Common myeloid progenitor, CD34-positive (primary cell): ENCODE measurements at regions of chr2 and their contacts with region 1.

Region 1: GRCh38 chr2:38430597-38431207 is 53.6 kb upstream of the ATL2 start:
- DNase-seq: no peak
- H3K4me3 ChIP-seq: no peak overlapping the region
- H3K27ac ChIP-seq: no peak overlapping the region
- H3K4me1 ChIP-seq: no peaks in the 10 kb centered on the region
- H3K27me3 ChIP-seq: peaks cover 0 to 2% (median 0%) of the 10 kb centered on the region in 5 experiments

Region 2: GRCh38 chr2:38417745-38418689 is 12.7 kb before region 1 on chr2:
- CTCF ChIA-PET with region 1: interaction called, 12 read pairs
- POLR2A ChIA-PET with region 1: no interaction called
- DNase-seq: no peak
- H3K4me3 ChIP-seq: no peak overlapping the region
- H3K27ac ChIP-seq: no peak overlapping the region
- H3K4me1 ChIP-seq: no peaks in the 10 kb centered on the region
- H3K27me3 ChIP-seq: peaks cover 0 to 3% (median 0%) of the 10 kb centered on the region in 5 experiments